Breast epithelium (tissue), 4 donors: ENCODE measurements at regions of chr4 and their contacts with region 1.

Region 1: GRCh38 chr4:121243485-121243884 is 79.4 kb upstream of the TNIP3 start:
- DNase-seq: no peak
- H3K4me3 ChIP-seq: peak overlapping the region in 2 of 3 donors; percentile 20
- H3K27ac ChIP-seq: no peak overlapping the region
- H3K4me1 ChIP-seq: no peaks in the 10 kb centered on the region
- H3K27me3 ChIP-seq: no peaks in the 10 kb centered on the region
- CTCF ChIP-seq: no peak
- POLR2A ChIP-seq: no peak

Region 2: GRCh38 chr4:119810001-119810400 is 1433.5 kb before region 1 on chr4:
- intact Hi-C with region 1: loop called (anchors 5 kb)
- DNase-seq: no peak
- H3K4me3 ChIP-seq: no peak overlapping the region
- H3K27ac ChIP-seq: no peak overlapping the region
- H3K4me1 ChIP-seq: no peaks in the 10 kb centered on the region
- H3K27me3 ChIP-seq: no peaks in the 10 kb centered on the region
- CTCF ChIP-seq: no peak
- POLR2A ChIP-seq: no peak

Region 3: DNA sequence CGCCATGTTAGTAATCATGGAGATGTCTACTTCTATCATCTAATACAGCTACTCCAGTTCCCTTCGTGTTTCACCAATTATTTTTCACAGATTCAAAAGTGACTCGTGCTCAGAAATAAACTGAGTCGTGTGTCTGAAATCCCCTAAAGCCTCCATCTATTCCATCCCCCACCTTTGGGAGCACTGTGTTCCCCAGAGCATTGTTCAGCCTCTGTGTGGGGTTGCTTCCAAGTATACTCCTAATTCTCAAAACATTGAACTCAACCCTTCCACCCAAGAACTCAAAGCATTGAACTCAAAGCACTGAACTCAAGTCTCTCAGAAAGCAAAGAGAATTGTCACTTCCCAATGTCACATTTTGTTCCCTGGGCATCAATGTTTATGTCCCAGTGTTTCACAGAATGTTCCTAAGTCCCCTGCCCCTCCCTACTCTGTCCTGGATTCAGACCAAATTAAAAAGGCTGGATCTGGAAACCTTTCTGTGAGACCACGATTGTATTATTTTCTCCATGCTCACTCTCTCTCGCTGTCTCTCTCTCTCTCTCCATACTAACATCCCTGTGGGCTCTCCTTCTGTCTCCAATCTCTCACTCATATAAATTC is 275.9 kb after region 1 on chr4:
- intact Hi-C with region 1: loop called (anchors 5 kb)
- DNase-seq: no peak
- H3K4me3 ChIP-seq: no peak overlapping the region
- H3K27ac ChIP-seq: no peak overlapping the region
- H3K4me1 ChIP-seq: no peaks in the 10 kb centered on the region
- H3K27me3 ChIP-seq: no peaks in the 10 kb centered on the region
- CTCF ChIP-seq: no peak
- POLR2A ChIP-seq: no peak